Heart left ventricle (tissue), 16 donors: ENCODE measurements at regions of chr9 and their contacts with region 1.

Region 1: GRCh38 chr9:27645161-27645840 is 72.0 kb upstream of the C9orf72 start:
- DNase-seq: no peak
- ATAC-seq: no peak
- H3K4me3 ChIP-seq: no peak overlapping the region
- H3K27ac ChIP-seq: no peak overlapping the region
- H3K4me1 ChIP-seq: peaks cover 0 to 13% (median 0%) of the 10 kb centered on the region in 12 donors
- H3K27me3 ChIP-seq: no peaks in the 10 kb centered on the region
- CTCF ChIP-seq: no peak
- POLR2A ChIP-seq: no peak

Region 2: DNA sequence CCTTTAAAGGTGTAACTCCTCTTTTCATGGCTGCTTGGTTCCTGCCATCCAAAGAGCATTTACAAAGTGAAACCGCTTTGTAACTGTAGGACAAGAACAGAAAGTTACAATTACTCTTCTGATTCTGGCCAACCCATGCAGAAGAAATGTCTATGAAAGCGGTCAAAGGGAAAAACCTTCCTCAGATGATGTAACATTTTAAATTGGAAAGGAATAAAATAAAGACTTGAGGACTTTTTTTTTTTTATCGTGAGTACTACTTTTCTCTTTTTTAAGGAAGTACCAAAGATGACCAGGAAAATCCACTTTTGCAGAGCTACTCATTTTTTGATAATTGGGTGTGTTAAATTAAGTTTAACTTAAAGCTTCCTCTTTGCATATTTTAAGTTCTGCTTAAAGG is 59.0 kb before region 1 on chr9:
- intact Hi-C with region 1: loop called in 1 of 10 experiments (anchors 10 kb)
- DNase-seq: no peak
- ATAC-seq: no peak
- H3K4me3 ChIP-seq: peak overlapping the region in 3 of 12 donors; percentile 1 to 29 (median 15)
- H3K27ac ChIP-seq: peak overlapping the region in 1 of 12 donors; percentile 89
- H3K4me1 ChIP-seq: peaks cover 0 to 30% (median 0%) of the 10 kb centered on the region in 12 donors
- H3K27me3 ChIP-seq: peaks cover 0 to 4% (median 0%) of the 10 kb centered on the region in 9 donors
- CTCF ChIP-seq: no peak
- POLR2A ChIP-seq: no peak

Region 3: DNA sequence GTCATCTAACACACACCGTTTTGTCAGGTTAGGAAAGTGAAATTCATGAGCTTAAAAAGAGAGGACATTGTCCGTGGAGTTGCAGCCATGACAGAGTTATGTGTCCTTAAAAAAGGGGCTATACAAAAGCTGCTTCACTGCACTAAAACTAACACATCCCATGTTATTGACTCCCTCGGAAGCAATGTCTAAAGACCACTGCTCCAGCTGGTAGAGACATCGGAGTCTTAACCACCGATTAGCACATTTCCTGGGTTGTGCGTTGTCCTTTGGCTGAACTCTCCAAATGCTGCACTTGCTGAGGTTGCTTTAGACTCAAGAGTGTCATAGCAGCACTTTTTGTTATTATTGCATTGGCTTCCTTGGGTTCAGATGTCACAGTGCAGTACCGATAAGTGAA is 56.3 kb after region 1 on chr9:
- intact Hi-C with region 1: no loop called
- DNase-seq: peak in 4 of 5 donors; percentile 26 to 50 (median 44)
- ATAC-seq: peak; percentile 67 to 88 (median 86)
- H3K4me3 ChIP-seq: peak overlapping the region in 1 of 12 donors; percentile 15
- H3K27ac ChIP-seq: peak overlapping the region in 2 of 12 donors; percentile 42 to 88
- H3K4me1 ChIP-seq: peaks cover 0 to 30% (median 0%) of the 10 kb centered on the region in 12 donors
- H3K27me3 ChIP-seq: no peaks in the 10 kb centered on the region
- CTCF ChIP-seq: no peak
- POLR2A ChIP-seq: no peak